Activated CD4-positive, alpha-beta T cell treated with anti-CD3 and anti-CD28 coated beads for 36 hours (primary cell): ENCODE measurements at regions of chr2 and their contacts with region 1.

Region 1: DNA sequence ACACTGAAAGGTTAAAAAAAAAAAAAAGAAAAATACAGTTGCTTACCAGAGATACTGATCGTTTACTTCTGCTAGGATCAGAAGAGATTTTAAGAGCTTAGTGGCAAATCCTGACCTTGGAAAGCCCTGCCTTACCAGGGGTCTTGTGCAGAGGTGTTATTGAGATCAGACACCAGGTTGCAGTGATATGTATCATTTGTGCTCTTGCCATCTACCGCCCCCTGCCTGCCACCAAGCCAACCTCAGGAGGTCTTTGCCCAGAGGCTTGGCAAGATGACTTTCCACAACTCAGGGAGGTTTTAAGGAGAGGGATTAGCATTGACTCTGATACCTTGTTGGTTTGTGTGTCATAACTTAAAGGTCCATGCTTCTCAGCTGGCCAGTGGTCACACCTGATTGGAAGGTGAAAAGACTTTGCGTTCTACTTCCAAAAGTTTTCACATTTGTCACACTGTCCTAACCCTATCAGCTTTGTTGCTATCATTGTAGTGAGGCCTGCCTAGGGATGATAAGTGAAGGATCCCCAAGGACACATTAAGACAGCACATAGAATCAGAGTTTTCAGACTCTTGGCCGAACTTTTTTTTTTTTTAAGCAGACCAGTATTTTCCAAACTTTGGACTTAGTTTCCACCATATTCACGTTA is 46.2 kb upstream of the MGAT5 start:
- DNase-seq: peak; percentile 82
- ATAC-seq: peak; percentile 87
- H3K4me3 Mint-ChIP-seq: no peak overlapping the region
- H3K27ac Mint-ChIP-seq: no peak overlapping the region
- H3K4me1 Mint-ChIP-seq: peaks cover 6% of the 10 kb centered on the region
- H3K27me3 Mint-ChIP-seq: no peaks in the 10 kb centered on the region

Region 2: DNA sequence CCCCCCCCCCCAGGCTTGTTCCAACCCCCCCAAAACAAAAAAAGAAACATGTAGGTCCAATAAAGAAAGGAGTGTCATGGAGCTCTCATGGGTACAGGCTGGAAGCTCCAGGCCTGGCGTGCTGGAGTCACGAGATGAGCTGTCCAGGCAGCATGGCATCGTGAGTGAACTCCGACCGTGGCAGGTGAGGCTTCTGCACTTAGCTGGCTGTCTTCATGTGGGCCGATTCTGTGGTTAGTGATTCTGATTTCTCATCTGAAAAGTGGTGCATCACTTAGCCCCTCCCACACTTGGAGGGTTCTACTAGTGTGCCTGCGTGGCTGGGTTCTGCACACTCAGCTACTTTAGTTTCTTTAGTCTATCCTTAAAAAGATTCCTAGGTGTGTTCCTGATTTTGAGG is 80.2 kb before region 1 on chr2:
- CTCF ChIA-PET with region 1: interaction called, 18 read pairs
- POLR2A ChIA-PET with region 1: no interaction called
- intact Hi-C with region 1: no loop called
- DNase-seq: peak; percentile 84
- ATAC-seq: peak; percentile 92
- H3K4me3 Mint-ChIP-seq: peak overlapping the region; percentile 10
- H3K27ac Mint-ChIP-seq: no peak overlapping the region
- H3K4me1 Mint-ChIP-seq: peaks cover 74% of the 10 kb centered on the region
- H3K27me3 Mint-ChIP-seq: no peaks in the 10 kb centered on the region